WTC11 (cell line): ENCODE measurements at regions of chr6 and their contacts with region 1.

Region 1: GRCh38 chr6:26568601-26569432 is 27.9 kb upstream of the ABT1 start:
- DNase-seq: peak; percentile 98
- ATAC-seq: peak; percentile 31
- H3K4me3 Mint-ChIP-seq: peak overlapping the region; percentile 97
- H3K27ac Mint-ChIP-seq: peak overlapping the region; percentile 58
- H3K4me1 Mint-ChIP-seq: peaks cover 9% of the 10 kb centered on the region; the same call in 1 of the 2 replicates
- H3K27me3 Mint-ChIP-seq: peaks cover 4% of the 10 kb centered on the region
- CTCF ChIP-seq: no peak

Region 2: DNA sequence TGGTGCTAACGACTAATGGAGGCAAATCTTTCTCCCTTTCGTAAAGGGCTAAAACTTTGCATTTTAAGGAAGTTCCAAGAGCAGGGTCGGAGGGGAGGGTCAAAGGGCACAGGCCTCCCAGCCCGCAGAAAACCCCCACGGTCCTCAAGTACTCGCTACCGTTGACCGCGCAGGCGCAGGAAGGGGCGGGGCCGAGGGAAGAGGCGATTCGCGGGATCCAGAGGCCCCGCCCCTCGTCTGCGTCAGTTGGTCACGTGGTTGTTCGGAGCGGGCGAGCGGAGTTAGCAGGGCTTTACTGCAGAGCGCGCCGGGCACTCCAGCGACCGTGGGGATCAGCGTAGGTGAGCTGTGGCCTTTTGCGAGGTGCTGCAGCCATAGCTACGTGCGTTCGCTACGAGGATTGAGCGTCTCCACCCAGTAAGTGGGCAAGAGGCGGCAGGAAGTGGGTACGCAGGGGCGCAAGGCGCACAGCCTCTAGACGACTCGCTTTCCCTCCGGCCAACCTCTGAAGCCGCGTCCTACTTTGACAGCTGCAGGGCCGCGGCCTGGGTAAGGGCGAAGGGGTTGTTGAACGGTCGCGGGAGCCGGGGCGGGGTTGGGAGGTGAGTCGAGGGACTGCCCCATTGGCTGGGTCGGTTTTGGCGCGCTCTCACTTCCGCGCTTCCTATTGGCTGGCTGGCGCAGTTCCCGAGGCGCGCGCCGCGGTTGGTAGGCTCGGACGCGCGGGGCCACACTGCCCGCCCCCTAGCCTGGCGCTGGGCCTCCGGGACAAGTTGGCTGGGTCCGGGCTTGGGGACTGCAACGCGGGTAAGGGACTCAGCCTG is 1793.9 kb before region 1 on chr6 and contains the start of gene GMNN:
- CTCF ChIA-PET with region 1: no interaction called
- POLR2A ChIA-PET with region 1: no interaction called
- DNase-seq: peak; percentile 99
- ATAC-seq: peak; percentile 94
- H3K4me3 Mint-ChIP-seq: peak within 1 kb of the TSS; percentile 98
- H3K27ac Mint-ChIP-seq: peak within 1 kb of the TSS; percentile 99
- H3K4me1 Mint-ChIP-seq: peaks cover 21% of the 10 kb centered on the region
- H3K27me3 Mint-ChIP-seq: no peaks in the 10 kb centered on the region
- CTCF ChIP-seq: no peak
- total RNA-seq, gene GMNN: 83.7 to 98.5 TPM (median 88.5 TPM) in 3 replicates

Region 3: GRCh38 chr6:26537846-26538571 is 30.8 kb before region 1 on chr6 and contains the start of gene HMGN4:
- CTCF ChIA-PET with region 1: interaction called, 13 read pairs
- POLR2A ChIA-PET with region 1: interaction called, 3 read pairs
- DNase-seq: peak; percentile 81
- ATAC-seq: peak; percentile 70
- H3K4me3 Mint-ChIP-seq: peak within 1 kb of the TSS; percentile 96
- H3K27ac Mint-ChIP-seq: peak within 1 kb of the TSS; percentile 100
- H3K4me1 Mint-ChIP-seq: peaks cover 34% of the 10 kb centered on the region
- H3K27me3 Mint-ChIP-seq: no peaks in the 10 kb centered on the region
- CTCF ChIP-seq: no peak
- total RNA-seq, gene HMGN4: 57.1 to 67.4 TPM (median 57.6 TPM) in 3 replicates

Region 4: GRCh38 chr6:26550250-26550993 is 18.4 kb before region 1 on chr6:
- CTCF ChIA-PET with region 1: interaction called, 13 read pairs
- POLR2A ChIA-PET with region 1: interaction called, 9 read pairs
- DNase-seq: peak; percentile 90
- ATAC-seq: peak; percentile 81
- H3K4me3 Mint-ChIP-seq: no peak overlapping the region; the same call in 1 of the 2 replicates
- H3K27ac Mint-ChIP-seq: peak overlapping the region; percentile 98
- H3K4me1 Mint-ChIP-seq: peaks cover 17% of the 10 kb centered on the region
- H3K27me3 Mint-ChIP-seq: no peaks in the 10 kb centered on the region
- CTCF ChIP-seq: no peak

Region 5: DNA sequence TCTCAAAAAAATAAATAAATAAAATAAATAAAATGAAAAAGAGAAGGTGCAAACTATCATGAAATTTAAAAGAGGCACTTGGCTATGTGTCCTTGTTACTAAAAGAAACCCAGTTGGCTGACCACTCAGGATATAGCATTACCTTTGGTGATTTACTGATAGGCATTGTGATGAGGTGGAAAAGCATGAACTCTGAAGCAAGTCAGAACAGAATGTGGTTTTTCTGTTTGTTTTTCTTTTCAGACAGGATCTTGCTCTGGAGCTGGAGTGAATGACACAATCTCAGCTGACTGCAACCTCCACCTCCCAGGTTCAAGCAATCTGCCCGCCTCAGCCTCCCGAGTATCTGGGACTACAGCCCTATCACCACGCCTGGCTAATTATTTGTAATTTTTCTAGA is 872.2 kb after region 1 on chr6:
- CTCF ChIA-PET with region 1: no interaction called
- POLR2A ChIA-PET with region 1: no interaction called
- DNase-seq: no peak
- ATAC-seq: no peak
- H3K4me3 Mint-ChIP-seq: no peak overlapping the region
- H3K27ac Mint-ChIP-seq: no peak overlapping the region
- H3K4me1 Mint-ChIP-seq: peaks cover 6% of the 10 kb centered on the region
- H3K27me3 Mint-ChIP-seq: no peaks in the 10 kb centered on the region
- CTCF ChIP-seq: no peak